Upper lobe of right lung (tissue), 1 donor: ENCODE measurements at regions of chr7 and their contacts with region 1.

Region 1: GRCh38 chr7:155069992-155070751 is at the start of gene HTR5A:
- DNase-seq: peak; percentile 92
- ATAC-seq: peak; percentile 99
- H3K4me3 ChIP-seq: no peak within 1 kb of the TSS
- H3K27ac ChIP-seq: no peak within 1 kb of the TSS
- H3K4me1 ChIP-seq: no peaks in the 10 kb centered on the region
- H3K27me3 ChIP-seq: peaks cover 24% of the 10 kb centered on the region
- CTCF ChIP-seq: no peak
- total RNA-seq, gene HTR5A: not detected

Region 2: DNA sequence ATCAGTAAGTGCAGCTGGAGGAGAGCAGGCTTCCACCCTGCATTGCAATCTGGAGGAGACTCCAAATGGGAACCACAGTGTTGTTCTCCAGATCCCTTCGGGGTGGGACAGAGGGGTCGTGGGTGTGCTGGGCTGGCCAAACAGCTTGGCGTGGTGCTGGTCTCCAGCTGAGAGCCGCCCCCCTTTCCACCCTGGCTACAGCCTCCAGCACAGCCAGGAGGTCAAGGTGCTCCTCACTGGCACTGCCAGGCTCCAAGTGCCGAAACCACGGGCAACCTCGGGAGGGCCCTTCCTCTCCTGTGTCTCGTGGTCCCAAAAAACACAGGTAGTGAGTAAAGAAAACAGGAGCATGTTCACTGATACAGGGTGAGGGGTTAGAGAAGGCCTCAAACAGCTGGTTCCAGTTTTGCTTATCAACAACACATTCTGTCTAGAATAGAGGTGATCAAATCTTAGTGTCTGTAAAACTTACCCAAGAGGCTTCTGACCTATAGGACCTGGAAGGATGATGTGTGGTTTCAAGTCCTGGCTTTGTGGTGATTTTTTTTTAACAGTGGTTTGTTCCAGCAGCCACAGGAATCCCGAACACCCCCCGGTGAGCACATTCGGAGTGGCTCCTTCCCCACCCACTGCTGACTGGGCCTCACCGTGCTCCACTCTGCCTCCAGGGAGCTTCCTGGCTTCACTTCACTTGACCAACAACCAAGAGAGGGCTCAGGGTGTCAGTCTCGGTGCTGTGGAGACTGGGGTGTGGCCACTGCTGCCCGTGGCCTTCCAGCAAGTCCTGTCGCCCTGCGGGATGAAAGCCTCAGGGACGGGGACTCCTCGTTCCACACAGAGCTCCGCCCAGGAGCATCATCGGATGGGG is 356.6 kb after region 1 on chr7:
- intact Hi-C with region 1: loop called (anchors 5 kb)
- DNase-seq: no peak
- ATAC-seq: no peak
- H3K4me3 ChIP-seq: no peak overlapping the region
- H3K27ac ChIP-seq: no peak overlapping the region
- H3K4me1 ChIP-seq: no peaks in the 10 kb centered on the region
- H3K27me3 ChIP-seq: peaks cover 11% of the 10 kb centered on the region
- CTCF ChIP-seq: no peak

Region 3: GRCh38 chr7:155533827-155534690 is 463.9 kb after region 1 on chr7:
- intact Hi-C with region 1: no loop called
- DNase-seq: peak; percentile 57
- ATAC-seq: peak; percentile 33
- H3K4me3 ChIP-seq: no peak overlapping the region
- H3K27ac ChIP-seq: no peak overlapping the region
- H3K4me1 ChIP-seq: peaks cover 12% of the 10 kb centered on the region
- H3K27me3 ChIP-seq: peaks cover 81% of the 10 kb centered on the region
- CTCF ChIP-seq: peak; percentile 51